Right ventricle myocardium superior (tissue), 1 donor: ENCODE measurements at regions of chr7 and their contacts with region 1.

Region 1: DNA sequence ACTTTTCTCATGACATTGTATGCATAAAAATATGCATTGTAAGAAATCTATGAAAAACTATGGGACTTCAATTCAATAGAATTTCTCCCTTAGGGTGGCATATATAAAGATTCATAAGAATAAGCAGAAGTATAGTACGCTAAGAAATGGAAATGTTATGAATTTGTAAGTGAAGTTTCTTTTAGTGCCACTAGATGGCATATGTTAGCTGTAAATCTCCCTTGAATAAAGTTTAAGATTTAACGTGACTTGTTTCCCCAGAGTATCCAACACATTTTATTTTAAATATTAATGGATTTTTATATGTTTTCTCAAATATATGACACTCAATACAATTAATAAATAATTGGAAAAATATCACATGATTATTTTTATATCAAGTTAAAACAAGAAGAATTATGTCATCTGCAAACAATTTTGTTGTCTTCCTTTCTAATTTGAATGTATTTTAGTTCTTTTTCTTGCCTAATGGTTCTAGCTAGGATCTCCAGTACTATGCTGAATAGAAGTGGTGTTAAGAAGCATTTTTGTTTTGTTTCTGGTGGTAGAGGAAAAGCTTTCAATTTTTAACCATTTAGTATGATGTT is 287.2 kb downstream of the HGF start:
- DNase-seq: no peak
- ATAC-seq: peak; percentile 64

Region 2: DNA sequence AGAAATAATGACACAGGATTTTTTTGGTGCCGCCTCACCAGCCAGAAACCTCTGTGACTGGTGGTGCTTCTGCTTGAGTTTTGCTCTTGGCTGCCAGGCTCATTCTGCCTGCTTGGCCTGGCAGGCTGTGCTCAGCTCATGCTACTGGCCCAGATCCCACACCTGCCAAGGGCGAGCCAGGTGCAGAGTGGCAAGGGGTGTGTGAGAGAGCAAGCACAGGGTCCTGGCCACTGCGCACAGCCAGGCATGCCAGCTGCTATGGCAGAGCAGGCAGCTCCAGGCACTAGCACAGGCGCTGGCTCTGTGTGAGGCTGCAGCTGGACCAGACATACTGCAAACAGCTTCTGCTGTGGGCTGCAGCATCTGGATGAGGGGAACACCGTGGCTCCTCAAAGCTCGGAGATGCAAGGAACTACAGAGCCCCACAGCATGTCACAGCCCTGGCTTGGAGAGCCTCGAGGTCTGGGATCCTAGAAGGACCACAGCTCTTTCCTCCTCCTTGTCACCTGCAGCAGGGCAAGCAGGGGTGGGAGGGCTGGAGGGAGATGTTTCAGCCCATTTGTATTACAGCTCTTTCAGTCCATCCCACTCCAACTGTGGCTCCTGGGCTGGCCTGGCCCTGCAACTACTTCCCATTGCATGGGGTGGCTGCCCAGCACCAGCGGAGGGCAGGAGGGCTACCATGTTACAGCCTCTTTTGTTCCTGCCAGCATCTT is 250.5 kb before region 1 on chr7:
- intact Hi-C with region 1: no loop called
- DNase-seq: peak; percentile 78
- ATAC-seq: peak; percentile 90

Region 3: GRCh38 chr7:81690251-81690650 is 207.6 kb after region 1 on chr7:
- intact Hi-C with region 1: no loop called
- DNase-seq: no peak
- ATAC-seq: no peak

Region 4: GRCh38 chr7:82572195-82572880 is 1089.6 kb after region 1 on chr7:
- intact Hi-C with region 1: loop called (anchors 10 kb)
- DNase-seq: peak; percentile 82
- ATAC-seq: peak; percentile 97